ENCODE measurements at regions of chr5 and their contacts with region 1.

Region 1: DNA sequence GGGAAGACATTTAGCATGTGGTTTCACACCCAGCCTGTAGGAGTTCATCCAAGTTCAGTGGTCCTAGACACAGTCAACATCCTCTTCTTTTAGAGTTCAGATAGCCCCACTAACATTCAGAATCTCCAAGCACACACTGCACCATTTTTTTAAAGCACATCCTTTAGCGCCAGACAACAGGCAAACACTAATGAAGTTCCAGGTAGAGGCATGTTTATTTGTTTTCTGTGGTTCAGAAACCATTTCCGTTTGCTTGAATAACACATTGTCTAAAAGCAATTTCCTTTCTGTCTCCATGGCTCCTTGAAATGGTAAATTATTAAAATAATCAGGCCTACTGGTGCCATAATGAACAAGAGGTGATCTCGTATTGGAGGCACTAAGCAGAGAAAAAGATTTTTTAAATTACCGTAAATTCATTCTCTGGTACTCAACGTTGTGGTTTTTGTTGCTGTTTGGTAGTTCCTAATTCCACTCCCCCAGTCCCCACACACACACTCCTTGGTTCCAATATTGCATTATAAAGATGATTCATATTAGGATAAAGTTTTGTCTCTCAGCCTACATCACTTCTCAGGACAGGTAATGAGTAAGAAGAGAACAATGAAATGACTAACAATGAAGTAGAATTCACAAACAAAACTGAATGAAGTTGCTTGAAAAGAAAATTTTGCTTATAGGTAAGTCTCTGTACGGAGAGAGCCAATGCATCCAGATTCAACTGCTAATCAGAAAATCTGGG is 153.1 kb downstream of the PCSK1 start:
- DNase-seq: peak; percentile 48
- ATAC-seq: peak; percentile 96
- H3K4me3 Mint-ChIP-seq: no peak overlapping the region
- H3K27ac Mint-ChIP-seq: peak overlapping the region; percentile 35
- H3K4me1 Mint-ChIP-seq: peaks cover 23% of the 10 kb centered on the region
- H3K27me3 Mint-ChIP-seq: peaks cover 30% of the 10 kb centered on the region

Region 2: DNA sequence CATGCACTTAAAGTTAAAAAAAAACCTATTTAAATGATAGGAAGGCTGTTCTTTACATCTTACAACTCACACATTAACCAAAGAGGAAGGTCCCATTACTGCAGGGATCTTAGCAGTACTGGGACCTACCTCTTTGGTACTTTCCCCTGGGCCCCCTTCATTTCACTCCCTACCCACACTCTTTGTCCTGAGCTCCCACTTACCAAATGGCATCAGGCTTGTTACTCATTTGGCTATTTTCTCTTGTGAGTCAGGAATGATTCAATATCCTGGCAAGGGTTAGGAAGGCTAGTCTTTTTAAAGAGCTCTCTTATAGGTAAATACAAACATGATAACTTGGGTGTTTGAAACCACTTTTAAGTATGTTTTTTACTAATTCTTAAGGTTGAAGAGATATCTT is 200.9 kb before region 1 on chr5:
- CTCF ChIA-PET with region 1: no interaction called
- POLR2A ChIA-PET with region 1: no interaction called
- intact Hi-C with region 1: loop called in 1 of 2 experiments (anchors 1 kb)
- DNase-seq: peak; percentile 66
- ATAC-seq: peak; percentile 97
- H3K4me3 Mint-ChIP-seq: no peak overlapping the region
- H3K27ac Mint-ChIP-seq: peak overlapping the region; percentile 83
- H3K4me1 Mint-ChIP-seq: peaks cover 42% of the 10 kb centered on the region
- H3K27me3 Mint-ChIP-seq: peaks cover 18% of the 10 kb centered on the region

Region 3: GRCh38 chr5:96220610-96221390 is 59.2 kb before region 1 on chr5:
- CTCF ChIA-PET with region 1: no interaction called
- POLR2A ChIA-PET with region 1: no interaction called
- intact Hi-C with region 1: loop called (anchors 1 kb)
- DNase-seq: peak; percentile 43
- ATAC-seq: peak; percentile 89
- H3K4me3 Mint-ChIP-seq: no peak overlapping the region
- H3K27ac Mint-ChIP-seq: peak overlapping the region; percentile 77
- H3K4me1 Mint-ChIP-seq: peaks cover 19% of the 10 kb centered on the region
- H3K27me3 Mint-ChIP-seq: peaks cover 13% of the 10 kb centered on the region

Region 4: DNA sequence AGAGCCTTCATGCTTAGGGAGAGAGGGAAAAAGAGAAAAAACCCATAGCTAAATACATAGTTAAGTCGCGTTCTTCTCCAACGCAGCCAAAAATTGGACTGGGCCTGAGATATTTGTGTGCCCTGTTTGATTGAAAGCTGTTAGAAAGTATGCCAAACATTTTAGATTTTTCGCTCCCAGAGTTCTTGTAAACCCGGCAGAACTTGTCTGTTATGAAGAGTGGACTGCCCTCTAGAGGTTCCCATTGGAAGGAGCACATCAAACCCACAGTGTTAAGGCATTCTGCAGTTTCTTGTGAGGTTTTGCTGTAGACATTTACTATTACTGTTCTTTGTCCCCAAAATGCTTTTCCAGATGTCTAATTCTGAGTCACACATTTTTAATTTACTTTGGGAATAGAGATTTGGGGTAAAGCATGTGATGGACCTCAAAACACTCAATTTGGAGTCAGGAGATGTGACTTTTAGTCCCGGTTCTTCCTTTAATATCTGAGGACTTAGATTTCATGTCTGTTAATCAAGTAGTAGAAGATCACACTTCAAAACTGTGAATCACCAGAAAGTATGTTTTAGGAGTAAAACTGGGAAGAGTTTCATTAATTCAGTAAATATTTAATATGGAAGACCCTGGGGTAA is 56.5 kb after region 1 on chr5:
- CTCF ChIA-PET with region 1: interaction called, 4 read pairs
- POLR2A ChIA-PET with region 1: no interaction called
- intact Hi-C with region 1: loop called in 1 of 2 experiments (anchors 2 kb)
- DNase-seq: peak; percentile 74
- ATAC-seq: peak; percentile 82
- H3K4me3 Mint-ChIP-seq: no peak overlapping the region
- H3K27ac Mint-ChIP-seq: no peak overlapping the region
- H3K4me1 Mint-ChIP-seq: peaks cover 9% of the 10 kb centered on the region
- H3K27me3 Mint-ChIP-seq: peaks cover 26% of the 10 kb centered on the region

Region 5: DNA sequence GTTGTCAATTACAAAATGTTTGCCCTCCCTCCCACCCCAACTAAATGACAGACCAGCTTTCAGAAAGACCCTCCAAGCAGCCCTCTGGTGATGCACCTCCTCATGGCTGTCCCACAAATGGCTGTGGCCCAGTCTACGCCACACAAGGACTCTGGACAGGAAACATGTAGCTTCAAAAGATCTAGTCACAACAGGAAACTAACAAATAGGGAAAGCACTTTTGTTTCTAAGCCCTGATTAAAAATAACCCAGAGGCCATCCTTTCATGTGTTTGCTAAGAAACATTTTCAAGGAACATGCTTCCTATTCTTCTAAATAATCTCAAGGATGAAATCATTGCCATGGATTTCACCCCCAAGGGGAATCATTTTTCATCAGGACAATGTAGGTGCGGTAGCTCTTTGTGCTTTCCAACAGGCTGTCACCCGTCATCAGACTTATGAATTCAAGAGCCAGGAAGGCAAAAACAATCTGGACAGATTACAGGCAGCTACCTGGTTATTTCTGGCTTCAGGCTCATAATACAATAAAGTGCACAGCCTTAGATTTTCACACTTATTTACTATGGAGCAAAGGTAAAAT is 133.0 kb after region 1 on chr5:
- CTCF ChIA-PET with region 1: no interaction called
- POLR2A ChIA-PET with region 1: no interaction called
- intact Hi-C with region 1: no loop called
- DNase-seq: no peak
- ATAC-seq: no peak
- H3K4me3 Mint-ChIP-seq: no peak overlapping the region
- H3K27ac Mint-ChIP-seq: no peak overlapping the region
- H3K4me1 Mint-ChIP-seq: peaks cover 5% of the 10 kb centered on the region
- H3K27me3 Mint-ChIP-seq: peaks cover 3% of the 10 kb centered on the region

Measured in activated CD4-positive, alpha-beta T cell treated with anti-CD3 and anti-CD28 coated beads for 36 hours (primary cell).